ENCODE measurements at regions of chr3 and their contacts with region 1.

Region 1: DNA sequence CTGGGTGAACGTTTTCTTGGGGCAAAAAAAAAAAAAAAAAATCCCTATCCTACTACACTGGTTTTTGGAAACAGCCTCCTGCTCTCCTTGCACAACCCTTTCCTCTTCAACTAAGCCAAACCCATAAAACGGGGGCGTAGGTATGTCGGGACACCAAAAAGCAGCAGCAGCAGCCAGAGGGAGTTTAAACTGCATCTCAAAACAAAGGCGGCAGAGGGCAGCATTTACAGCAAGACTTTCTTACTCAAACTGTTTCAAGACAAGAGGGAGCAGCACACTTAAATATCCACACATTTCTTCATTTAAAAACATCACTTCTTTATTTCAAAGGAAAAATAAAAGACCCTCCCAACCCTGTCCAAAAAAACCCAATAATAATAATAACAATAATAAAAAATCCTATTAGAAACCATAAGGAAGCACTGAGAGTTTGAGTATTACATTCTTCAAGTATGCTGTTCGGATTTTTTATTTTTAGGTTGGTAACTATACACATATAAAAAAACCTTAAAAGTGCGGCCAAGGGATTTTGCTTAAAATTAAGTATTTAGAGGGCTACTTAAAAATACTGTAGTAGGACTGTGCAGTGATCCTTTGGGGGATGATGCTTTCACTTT is 43.9 kb upstream of the PLXND1 start:
- DNase-seq: peak; percentile 77
- ATAC-seq: peak; percentile 32
- H3K4me3 ChIP-seq: no peak overlapping the region
- H3K27ac ChIP-seq: peak overlapping the region; percentile 79; the same call in 1 of the 2 replicates
- H3K4me1 ChIP-seq: peaks cover 34% of the 10 kb centered on the region
- H3K27me3 ChIP-seq: no peaks in the 10 kb centered on the region
- CTCF ChIP-seq: peak; percentile 75

Region 2: GRCh38 chr3:129490242-129491045 is 159.9 kb before region 1 on chr3:
- CTCF ChIA-PET with region 1: no interaction called
- POLR2A ChIA-PET with region 1: no interaction called
- intact Hi-C with region 1: loop called (anchors 1 kb)
- DNase-seq: peak; percentile 75
- ATAC-seq: peak; percentile 90
- H3K4me3 ChIP-seq: no peak overlapping the region
- H3K27ac ChIP-seq: peak overlapping the region; percentile 59
- H3K4me1 ChIP-seq: peaks cover 34% of the 10 kb centered on the region
- H3K27me3 ChIP-seq: no peaks in the 10 kb centered on the region
- CTCF ChIP-seq: peak; percentile 84

Region 3: DNA sequence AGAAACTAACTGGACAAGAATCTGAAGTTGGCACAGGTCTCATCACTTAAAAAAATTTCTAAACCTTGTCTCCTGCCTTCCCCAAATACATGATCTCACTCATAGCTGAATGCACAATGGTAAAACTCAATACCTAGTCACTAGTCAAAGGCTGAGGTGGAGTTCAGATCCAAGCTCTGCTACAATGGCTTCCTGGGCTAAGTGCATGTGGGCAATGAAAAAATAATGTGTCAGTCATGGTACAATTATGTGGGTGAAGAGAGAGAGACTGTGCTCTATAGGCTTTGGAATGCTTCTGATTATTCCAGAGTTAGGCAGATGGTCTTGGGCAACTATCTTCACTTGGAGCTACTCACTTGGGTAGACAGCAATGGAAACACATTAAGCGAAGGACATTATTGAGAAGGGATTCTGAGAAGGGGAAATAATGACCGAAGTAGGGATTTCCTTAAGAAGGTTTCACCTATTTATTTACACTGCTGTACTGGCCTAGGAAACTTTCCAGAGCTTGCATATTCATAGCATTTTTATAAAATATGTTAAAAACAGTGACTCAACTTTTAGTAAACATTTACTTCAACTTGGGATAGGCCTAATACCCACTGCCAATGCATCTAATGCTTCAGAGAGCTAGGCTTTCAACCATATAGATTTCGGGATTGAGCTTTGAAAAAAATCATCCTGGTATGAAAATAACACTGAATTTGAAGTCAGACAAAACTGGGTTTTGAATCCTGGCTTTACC is 14.8 kb after region 1 on chr3:
- CTCF ChIA-PET with region 1: no interaction called
- POLR2A ChIA-PET with region 1: no interaction called
- intact Hi-C with region 1: loop called (anchors 1 kb)
- DNase-seq: peak; percentile 76
- ATAC-seq: peak; percentile 52
- H3K4me3 ChIP-seq: peak overlapping the region; percentile 15; the same call in 1 of the 2 replicates
- H3K27ac ChIP-seq: peak overlapping the region; percentile 97
- H3K4me1 ChIP-seq: peaks cover 53% of the 10 kb centered on the region
- H3K27me3 ChIP-seq: no peaks in the 10 kb centered on the region
- CTCF ChIP-seq: no peak

Region 4: GRCh38 chr3:129732200-129732876 is 82.0 kb after region 1 on chr3:
- CTCF ChIA-PET with region 1: no interaction called
- POLR2A ChIA-PET with region 1: no interaction called
- intact Hi-C with region 1: loop called (anchors 2 kb)
- DNase-seq: peak; percentile 48
- ATAC-seq: peak; percentile 94
- H3K4me3 ChIP-seq: no peak overlapping the region
- H3K27ac ChIP-seq: peak overlapping the region; percentile 72
- H3K4me1 ChIP-seq: peaks cover 15% of the 10 kb centered on the region
- H3K27me3 ChIP-seq: no peaks in the 10 kb centered on the region
- CTCF ChIP-seq: no peak

Region 5: DNA sequence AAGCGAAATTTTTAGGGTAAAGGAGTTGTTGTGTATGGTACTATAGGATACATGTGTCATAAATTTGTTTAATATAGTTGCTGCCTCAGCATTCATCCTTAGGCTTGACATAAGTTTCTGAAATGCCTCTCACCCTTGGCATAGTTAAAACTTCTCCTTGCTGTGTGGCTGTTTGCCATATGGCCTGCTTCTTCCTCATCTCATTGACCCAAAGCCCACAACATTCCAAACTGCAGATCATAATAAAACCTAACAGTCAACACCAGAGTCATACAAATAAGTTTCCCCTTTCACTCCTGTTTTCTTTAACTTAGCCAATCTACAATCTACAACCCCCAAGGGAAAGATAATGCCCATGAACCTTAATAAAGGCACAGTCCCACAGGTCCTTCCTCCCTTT is 106.5 kb after region 1 on chr3:
- CTCF ChIA-PET with region 1: no interaction called
- POLR2A ChIA-PET with region 1: no interaction called
- intact Hi-C with region 1: loop called (anchors 5 kb)
- DNase-seq: peak; percentile 58
- ATAC-seq: peak; percentile 69
- H3K4me3 ChIP-seq: no peak overlapping the region
- H3K27ac ChIP-seq: peak overlapping the region; percentile 18; the same call in 1 of the 2 replicates
- H3K4me1 ChIP-seq: peaks cover 10% of the 10 kb centered on the region
- H3K27me3 ChIP-seq: no peaks in the 10 kb centered on the region
- CTCF ChIP-seq: no peak

Region 6: GRCh38 chr3:129794311-129795185 is 144.2 kb after region 1 on chr3:
- CTCF ChIA-PET with region 1: no interaction called
- POLR2A ChIA-PET with region 1: no interaction called
- intact Hi-C with region 1: loop called (anchors 2 kb)
- DNase-seq: peak; percentile 92
- ATAC-seq: peak; percentile 80
- H3K4me3 ChIP-seq: peak overlapping the region; percentile 90
- H3K27ac ChIP-seq: peak overlapping the region; percentile 99
- H3K4me1 ChIP-seq: peaks cover 36% of the 10 kb centered on the region
- H3K27me3 ChIP-seq: no peaks in the 10 kb centered on the region
- CTCF ChIP-seq: no peak

Measured in PC-3 (cell line).